Common myeloid progenitor, CD34-positive (primary cell): ENCODE measurements at regions of chr2 and their contacts with region 1.

Region 1: GRCh38 chr2:46650556-46651001 is 171.2 kb downstream of the TMEM247 start:
- DNase-seq: peak; percentile 83 to 92 (median 88)
- H3K4me3 ChIP-seq: no peak overlapping the region
- H3K27ac ChIP-seq: no peak overlapping the region
- H3K4me1 ChIP-seq: peaks cover 0 to 4% (median 3%) of the 10 kb centered on the region in 4 experiments
- H3K27me3 ChIP-seq: peaks cover 0 to 2% (median 0%) of the 10 kb centered on the region in 5 experiments

Region 2: GRCh38 chr2:46632349-46632748 is 18.2 kb before region 1 on chr2:
- CTCF ChIA-PET with region 1: interaction called, 30 read pairs
- POLR2A ChIA-PET with region 1: no interaction called
- DNase-seq: peak; percentile 56 to 79 (median 73)
- H3K4me3 ChIP-seq: no peak overlapping the region
- H3K27ac ChIP-seq: no peak overlapping the region
- H3K4me1 ChIP-seq: peaks cover 0 to 9% (median 7%) of the 10 kb centered on the region in 4 experiments
- H3K27me3 ChIP-seq: no peaks in the 10 kb centered on the region

Region 3: DNA sequence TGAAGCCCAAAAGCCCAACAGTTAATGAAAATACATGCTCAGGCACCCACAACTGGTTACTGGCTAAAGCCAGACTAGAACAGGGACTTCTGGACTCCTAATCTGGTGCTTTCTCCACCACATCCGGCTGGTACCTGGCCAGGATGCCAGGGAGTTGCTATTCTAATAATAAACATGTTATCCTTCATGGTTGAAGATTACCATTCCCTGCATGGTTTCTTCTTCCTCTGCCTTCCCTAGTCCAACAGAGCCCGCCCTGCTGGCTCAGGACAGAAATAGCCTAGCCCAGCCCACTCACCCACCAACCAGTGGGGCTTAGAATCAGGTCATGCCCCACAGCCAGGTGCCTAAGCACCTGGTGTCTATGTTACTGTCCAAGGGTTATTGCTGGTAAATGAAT is 13.0 kb after region 1 on chr2:
- CTCF ChIA-PET with region 1: interaction called, 18 read pairs
- POLR2A ChIA-PET with region 1: no interaction called
- DNase-seq: no peak
- H3K4me3 ChIP-seq: no peak overlapping the region
- H3K27ac ChIP-seq: no peak overlapping the region
- H3K4me1 ChIP-seq: no peaks in the 10 kb centered on the region
- H3K27me3 ChIP-seq: no peaks in the 10 kb centered on the region

Region 4: DNA sequence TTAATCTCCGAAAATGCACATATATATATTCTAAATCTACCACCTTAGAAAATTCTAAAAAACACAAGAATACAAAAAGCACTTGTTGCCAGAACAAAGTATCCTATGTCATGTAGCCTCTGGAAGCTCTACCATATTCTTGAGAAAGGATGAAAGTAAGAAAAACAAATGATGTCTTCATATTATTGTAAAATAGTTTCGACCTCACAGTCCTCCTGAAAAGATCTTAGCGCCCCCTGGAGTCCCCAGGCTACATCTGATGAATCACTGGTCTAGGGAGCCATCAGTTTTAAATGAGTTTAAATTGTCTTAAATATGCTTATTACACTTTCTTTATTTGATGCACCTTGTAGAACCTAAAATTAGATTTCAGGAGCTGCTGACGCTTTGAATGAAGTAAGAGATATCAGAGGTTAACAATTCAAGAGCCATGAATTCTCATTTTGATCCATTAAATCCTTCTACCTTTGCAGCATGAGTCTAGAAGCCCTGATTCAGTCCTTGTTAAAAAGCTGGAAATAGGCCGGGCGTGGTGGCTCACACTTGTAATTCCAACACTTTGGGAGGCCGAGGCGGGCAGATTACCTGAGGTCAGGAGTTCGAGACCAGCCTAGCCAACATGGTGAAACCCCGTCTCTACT is 126.2 kb after region 1 on chr2:
- CTCF ChIA-PET with region 1: interaction called, 46 read pairs
- POLR2A ChIA-PET with region 1: no interaction called
- DNase-seq: peak; percentile 55 to 82 (median 76)
- H3K4me3 ChIP-seq: no peak overlapping the region
- H3K27ac ChIP-seq: no peak overlapping the region
- H3K4me1 ChIP-seq: no peaks in the 10 kb centered on the region
- H3K27me3 ChIP-seq: no peaks in the 10 kb centered on the region